HepG2 (cell line): ENCODE measurements at regions of chrX and their contacts with region 1.

Region 1: GRCh38 chrX:11533211-11533651 is 132.5 kb downstream of the ARHGAP6 start:
- DNase-seq: peak; percentile 68
- ATAC-seq: peak; percentile 70
- H3K4me3 ChIP-seq: no peak overlapping the region
- H3K27ac ChIP-seq: no peak overlapping the region
- H3K4me1 ChIP-seq: no peaks in the 10 kb centered on the region
- H3K27me3 ChIP-seq: no peaks in the 10 kb centered on the region
- CTCF ChIP-seq: peak; percentile 55
- EP300 ChIP-seq: no peak
- POLR2A ChIP-seq: no peak
- RAD21 ChIP-seq: peak; percentile 50; the same call in 1 of the 2 replicates

Region 2: GRCh38 chrX:11579636-11580600 is 46.7 kb after region 1 on chrX:
- CTCF ChIA-PET with region 1: no interaction called
- POLR2A ChIA-PET with region 1: no interaction called
- in situ Hi-C with region 1: no loop called
- intact Hi-C with region 1: no loop called
- DNase-seq: no peak
- ATAC-seq: no peak
- H3K4me3 ChIP-seq: no peak overlapping the region
- H3K27ac ChIP-seq: no peak overlapping the region
- H3K4me1 ChIP-seq: no peaks in the 10 kb centered on the region
- H3K27me3 ChIP-seq: no peaks in the 10 kb centered on the region
- CTCF ChIP-seq: no peak
- EP300 ChIP-seq: no peak
- POLR2A ChIP-seq: no peak
- RAD21 ChIP-seq: no peak

Region 3: GRCh38 chrX:11724122-11725017 is 191.1 kb after region 1 on chrX:
- CTCF ChIA-PET with region 1: interaction called, 10 read pairs
- POLR2A ChIA-PET with region 1: no interaction called
- in situ Hi-C with region 1: no loop called
- intact Hi-C with region 1: loop called (anchors 1 kb)
- DNase-seq: peak; percentile 0
- ATAC-seq: no peak
- H3K4me3 ChIP-seq: no peak overlapping the region
- H3K27ac ChIP-seq: no peak overlapping the region
- H3K4me1 ChIP-seq: no peaks in the 10 kb centered on the region
- H3K27me3 ChIP-seq: no peaks in the 10 kb centered on the region
- CTCF ChIP-seq: peak; percentile 39; the same call in 1 of the 2 replicates
- EP300 ChIP-seq: no peak
- POLR2A ChIP-seq: no peak
- RAD21 ChIP-seq: no peak

Region 4: DNA sequence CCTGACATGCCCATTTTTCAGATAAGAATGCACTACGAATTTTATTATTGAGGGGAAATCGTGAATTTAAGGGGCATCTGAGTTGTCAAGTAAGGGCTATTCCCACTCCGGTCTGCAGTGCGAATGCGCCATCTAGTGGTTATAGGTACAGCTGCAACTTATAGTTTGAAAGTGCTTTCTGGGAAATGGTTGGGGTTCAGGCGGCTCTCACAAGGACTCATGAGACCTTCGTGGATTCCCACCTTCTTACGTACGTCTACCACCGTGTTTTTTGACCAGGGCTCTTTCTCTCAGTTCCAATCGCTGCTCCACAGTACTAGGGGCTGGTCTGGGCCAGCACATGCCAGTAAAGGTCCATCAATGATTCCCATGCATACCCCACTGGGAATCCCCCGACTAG is 237.1 kb after region 1 on chrX:
- CTCF ChIA-PET with region 1: interaction called, 32 read pairs
- POLR2A ChIA-PET with region 1: no interaction called
- in situ Hi-C with region 1: loop called (anchors 5 kb)
- intact Hi-C with region 1: loop called (anchors 1 kb)
- DNase-seq: peak; percentile 23
- ATAC-seq: peak; percentile 84
- H3K4me3 ChIP-seq: no peak overlapping the region
- H3K27ac ChIP-seq: no peak overlapping the region
- H3K4me1 ChIP-seq: no peaks in the 10 kb centered on the region
- H3K27me3 ChIP-seq: no peaks in the 10 kb centered on the region
- CTCF ChIP-seq: peak; percentile 73
- EP300 ChIP-seq: no peak
- POLR2A ChIP-seq: no peak
- RAD21 ChIP-seq: no peak

Region 5: DNA sequence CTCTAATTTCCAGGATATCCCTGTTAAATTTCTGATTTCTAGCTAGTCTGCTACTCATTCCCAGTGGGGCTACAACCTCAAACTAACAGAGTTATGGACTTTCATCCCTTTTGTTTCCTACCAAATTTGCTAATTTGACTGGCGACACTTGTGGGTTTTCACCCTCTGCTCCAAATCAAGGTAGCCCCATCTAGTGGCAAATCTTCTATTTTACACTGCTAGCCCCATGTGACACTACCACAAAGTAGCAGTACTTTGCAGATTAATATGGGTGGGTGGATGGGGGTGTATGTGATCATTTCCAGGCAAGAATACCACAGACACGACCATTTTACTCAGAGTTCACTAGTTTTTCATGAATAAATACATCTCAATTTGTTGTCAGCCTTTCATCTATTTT is 375.1 kb after region 1 on chrX:
- CTCF ChIA-PET with region 1: interaction called, 4 read pairs
- POLR2A ChIA-PET with region 1: no interaction called
- in situ Hi-C with region 1: no loop called
- intact Hi-C with region 1: loop called (anchors 2 kb)
- DNase-seq: peak; percentile 2
- ATAC-seq: peak; percentile 76
- H3K4me3 ChIP-seq: no peak overlapping the region
- H3K27ac ChIP-seq: no peak overlapping the region
- H3K4me1 ChIP-seq: no peaks in the 10 kb centered on the region
- H3K27me3 ChIP-seq: no peaks in the 10 kb centered on the region
- CTCF ChIP-seq: peak; percentile 44
- EP300 ChIP-seq: no peak
- POLR2A ChIP-seq: no peak
- RAD21 ChIP-seq: no peak